ENCODE measurements at regions of chr3 and their contacts with region 1.

Region 1: DNA sequence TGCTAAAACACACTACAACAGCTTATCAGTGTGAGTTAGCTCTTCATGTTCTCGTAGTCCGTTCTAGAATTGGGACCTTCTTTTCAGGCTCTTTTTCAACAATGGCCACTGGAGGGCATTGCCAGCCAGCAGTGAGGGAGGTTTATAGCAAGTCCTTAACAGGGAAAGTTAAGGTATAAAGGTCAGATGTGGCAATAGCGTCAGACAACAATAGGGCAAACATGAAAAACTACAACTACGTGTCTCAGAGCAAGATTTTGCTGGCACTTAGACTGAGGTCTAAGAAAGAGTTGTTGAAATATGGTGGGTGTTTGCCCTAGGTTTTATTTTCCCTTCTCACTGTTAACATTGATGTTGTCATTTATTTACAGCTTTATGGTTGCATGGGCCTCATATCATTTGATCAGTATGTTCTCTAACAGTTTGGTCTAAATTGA is 161.4 kb downstream of the GMNC start:
- DNase-seq: no peak
- H3K4me3 ChIP-seq: no peak overlapping the region
- H3K27ac ChIP-seq: no peak overlapping the region
- H3K27me3 ChIP-seq: no peaks in the 10 kb centered on the region
- CTCF ChIP-seq: peak; percentile 70

Region 2: DNA sequence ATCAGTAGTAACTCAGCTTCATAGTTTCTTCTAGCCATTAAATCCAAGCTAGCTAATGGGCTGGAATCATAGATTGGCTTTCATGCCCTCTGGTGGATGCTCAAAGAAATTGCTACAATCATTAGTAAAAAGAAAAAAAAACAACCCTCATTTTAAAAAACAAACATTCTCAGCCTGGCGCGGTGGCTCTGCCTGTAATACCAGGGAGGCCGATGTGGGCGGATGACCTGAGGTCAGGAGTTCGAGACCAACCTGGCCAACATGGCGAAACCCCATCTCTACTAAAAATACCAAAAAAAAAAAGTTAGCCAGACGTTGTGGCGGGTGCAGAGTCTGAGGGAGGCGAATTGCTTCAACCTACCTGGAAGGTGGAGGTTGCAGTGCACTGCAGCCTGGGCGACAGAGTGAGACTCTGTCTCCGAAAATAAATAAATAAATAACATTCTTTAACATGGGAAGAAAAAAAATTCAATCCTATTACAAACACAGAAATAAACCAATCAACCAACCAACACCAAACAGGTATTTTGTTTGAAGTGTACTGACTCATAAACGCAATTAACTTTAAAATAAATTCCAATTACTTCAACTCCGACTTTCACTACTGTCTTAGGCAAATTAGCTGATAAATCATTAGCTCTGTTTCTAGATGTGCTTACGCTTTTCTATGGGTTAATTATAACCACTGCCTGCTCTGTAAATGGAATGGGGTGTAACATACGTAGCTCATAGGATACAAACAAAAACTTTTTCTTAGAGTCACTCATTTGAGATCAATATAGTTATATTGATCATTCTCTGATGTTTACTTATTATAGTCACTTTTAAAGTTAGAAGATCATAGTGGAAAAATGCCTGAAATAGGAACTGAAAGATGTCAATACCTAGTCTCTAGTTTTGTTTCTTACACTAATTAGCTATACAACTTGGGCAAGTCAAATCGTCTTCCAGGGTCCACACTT is 276.4 kb before region 1 on chr3:
- CTCF ChIA-PET with region 1: interaction called, 14 read pairs
- POLR2A ChIA-PET with region 1: no interaction called
- DNase-seq: peak; percentile 37
- H3K4me3 ChIP-seq: no peak overlapping the region
- H3K27ac ChIP-seq: no peak overlapping the region
- H3K27me3 ChIP-seq: no peaks in the 10 kb centered on the region
- CTCF ChIP-seq: peak; percentile 75

Region 3: DNA sequence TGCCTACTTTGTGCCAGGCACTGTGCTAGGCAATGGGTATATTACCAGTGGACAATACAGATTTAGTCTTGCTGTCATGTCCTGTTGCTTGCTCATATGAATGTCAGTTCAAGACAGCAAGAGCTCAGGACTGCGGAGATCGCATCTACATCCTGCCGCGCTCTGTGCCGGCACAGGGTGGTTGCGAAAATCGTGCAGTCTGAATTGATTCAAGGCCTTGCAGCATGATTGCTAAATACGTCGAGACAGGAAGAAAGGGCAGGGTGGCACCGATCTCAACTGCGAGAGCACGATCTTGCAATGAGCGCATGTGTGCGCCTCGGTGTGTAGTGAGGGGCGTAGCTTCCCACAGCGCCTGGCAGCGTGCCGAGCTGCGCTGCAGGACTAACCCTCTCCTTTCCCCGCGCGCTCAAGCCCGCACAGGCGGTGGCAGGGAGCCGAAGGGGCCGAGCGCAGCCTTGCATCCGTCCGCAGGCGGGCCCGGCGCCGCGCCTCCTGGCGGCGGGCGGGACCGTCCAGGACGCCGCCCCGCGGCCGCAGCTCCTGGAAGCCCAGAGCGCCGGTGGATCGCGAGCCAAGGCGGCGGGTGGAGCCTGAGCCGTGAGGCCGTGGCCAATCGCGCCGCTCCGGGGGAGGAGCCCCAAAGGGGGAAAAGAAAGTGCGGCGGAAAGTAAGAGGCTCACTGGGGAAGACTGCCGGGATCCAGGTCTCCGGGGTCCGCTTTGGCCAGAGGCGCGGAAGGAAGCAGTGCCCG is 187.5 kb before region 1 on chr3 and contains the start of gene IL1RAP:
- CTCF ChIA-PET with region 1: interaction called, 45 read pairs
- POLR2A ChIA-PET with region 1: interaction called, 11 read pairs
- DNase-seq: peak; percentile 65
- H3K4me3 ChIP-seq: peak within 1 kb of the TSS; percentile 86
- H3K27ac ChIP-seq: peak within 1 kb of the TSS; percentile 35
- H3K27me3 ChIP-seq: no peaks in the 10 kb centered on the region
- CTCF ChIP-seq: peak; percentile 18
- polyA plus RNA-seq, gene IL1RAP: 9.9 and 11.4 TPM in 2 replicates

Region 4: DNA sequence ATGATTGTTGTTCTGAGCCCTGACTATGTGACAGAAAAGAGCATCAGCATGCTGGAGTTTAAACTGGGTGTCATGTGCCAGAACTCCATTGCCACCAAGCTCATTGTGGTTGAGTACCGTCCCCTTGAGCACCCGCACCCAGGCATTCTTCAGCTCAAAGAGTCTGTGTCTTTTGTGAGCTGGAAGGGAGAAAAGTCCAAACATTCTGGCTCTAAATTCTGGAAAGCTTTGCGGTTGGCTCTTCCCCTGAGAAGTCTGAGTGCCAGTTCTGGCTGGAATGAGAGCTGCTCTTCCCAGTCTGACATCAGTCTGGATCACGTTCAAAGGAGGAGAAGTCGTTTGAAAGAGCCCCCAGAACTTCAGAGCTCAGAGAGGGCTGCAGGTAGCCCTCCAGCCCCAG is 45.2 kb before region 1 on chr3:
- CTCF ChIA-PET with region 1: no interaction called
- POLR2A ChIA-PET with region 1: no interaction called
- DNase-seq: no peak
- H3K4me3 ChIP-seq: no peak overlapping the region
- H3K27ac ChIP-seq: no peak overlapping the region
- H3K27me3 ChIP-seq: no peaks in the 10 kb centered on the region
- CTCF ChIP-seq: no peak

Region 5: DNA sequence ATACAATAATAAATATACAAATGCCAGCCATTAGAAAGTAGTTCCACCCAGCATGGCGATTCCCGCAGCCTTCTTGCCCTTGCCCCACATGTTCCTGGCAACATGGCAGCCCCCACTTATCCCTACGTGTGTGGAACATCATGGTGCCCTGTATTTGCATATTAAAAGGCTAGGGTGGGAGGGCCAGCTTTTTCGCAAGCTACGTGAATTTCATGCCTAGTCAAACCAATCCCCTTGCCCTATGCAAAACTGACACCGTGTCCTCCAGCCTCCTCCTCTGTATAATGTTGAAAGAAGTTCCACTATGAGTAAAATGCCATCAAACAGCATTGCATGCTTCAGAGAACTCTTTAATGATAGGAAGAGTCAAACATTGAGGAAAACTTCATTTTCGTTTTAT is 16.4 kb before region 1 on chr3:
- CTCF ChIA-PET with region 1: interaction called, 11 read pairs
- POLR2A ChIA-PET with region 1: no interaction called
- DNase-seq: no peak
- H3K4me3 ChIP-seq: no peak overlapping the region
- H3K27ac ChIP-seq: no peak overlapping the region
- H3K27me3 ChIP-seq: no peaks in the 10 kb centered on the region
- CTCF ChIP-seq: no peak

Region 6: GRCh38 chr3:190747571-190747970 is 46.5 kb after region 1 on chr3:
- CTCF ChIA-PET with region 1: interaction called, 10 read pairs
- POLR2A ChIA-PET with region 1: no interaction called
- DNase-seq: no peak
- H3K4me3 ChIP-seq: no peak overlapping the region
- H3K27ac ChIP-seq: no peak overlapping the region
- H3K27me3 ChIP-seq: no peaks in the 10 kb centered on the region
- CTCF ChIP-seq: no peak

Region 7: GRCh38 chr3:190883973-190884832 is 183.1 kb after region 1 on chr3:
- CTCF ChIA-PET with region 1: interaction called, 31 read pairs
- POLR2A ChIA-PET with region 1: no interaction called
- DNase-seq: peak; percentile 38
- H3K4me3 ChIP-seq: no peak overlapping the region
- H3K27ac ChIP-seq: no peak overlapping the region
- H3K27me3 ChIP-seq: no peaks in the 10 kb centered on the region
- CTCF ChIP-seq: peak; percentile 97